Breast epithelium (tissue), 4 donors: ENCODE measurements at regions of chr21 and their contacts with region 1.

Region 1: DNA sequence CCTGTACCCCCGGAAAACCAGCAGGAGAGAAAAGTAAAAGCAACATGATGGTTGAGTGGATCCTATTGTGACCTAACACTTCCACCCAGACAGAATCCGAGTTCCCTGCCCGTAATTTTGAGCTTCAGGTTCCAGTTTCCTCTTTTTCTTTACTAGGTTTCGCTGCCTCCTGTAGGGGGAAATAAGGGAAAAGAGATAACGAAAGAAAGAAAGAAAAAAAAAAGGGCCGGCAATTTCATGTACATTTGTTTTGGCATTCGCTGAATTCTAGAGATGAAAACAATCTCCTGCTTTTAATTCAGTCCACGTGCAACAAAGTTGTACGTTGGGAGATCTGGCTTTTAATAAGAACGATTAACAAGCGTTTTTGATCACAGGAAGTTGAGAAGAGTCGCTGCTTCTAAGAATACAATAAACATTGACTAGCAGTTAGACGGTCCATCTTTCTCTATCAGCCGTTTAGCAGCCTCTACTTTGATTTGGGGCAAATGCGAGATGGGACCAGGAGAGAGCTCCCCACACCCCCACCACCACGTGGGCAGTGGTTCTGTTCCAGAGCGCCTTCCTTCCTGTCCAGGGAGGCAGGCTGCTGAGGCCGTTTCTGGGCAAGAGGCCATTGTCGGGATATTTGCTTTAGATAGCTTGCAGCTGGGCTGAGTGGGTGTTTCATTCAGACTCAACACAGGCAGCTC is 155.9 kb upstream of the RUNX1 start:
- DNase-seq: no peak
- H3K4me3 ChIP-seq: peak overlapping the region; percentile 10 to 50 (median 13)
- H3K27ac ChIP-seq: peak overlapping the region; percentile 68 to 90
- H3K4me1 ChIP-seq: peaks cover 0 to 5% of the 10 kb centered on the region in 2 donors
- H3K27me3 ChIP-seq: no peaks in the 10 kb centered on the region
- CTCF ChIP-seq: no peak
- POLR2A ChIP-seq: no peak

Region 2: DNA sequence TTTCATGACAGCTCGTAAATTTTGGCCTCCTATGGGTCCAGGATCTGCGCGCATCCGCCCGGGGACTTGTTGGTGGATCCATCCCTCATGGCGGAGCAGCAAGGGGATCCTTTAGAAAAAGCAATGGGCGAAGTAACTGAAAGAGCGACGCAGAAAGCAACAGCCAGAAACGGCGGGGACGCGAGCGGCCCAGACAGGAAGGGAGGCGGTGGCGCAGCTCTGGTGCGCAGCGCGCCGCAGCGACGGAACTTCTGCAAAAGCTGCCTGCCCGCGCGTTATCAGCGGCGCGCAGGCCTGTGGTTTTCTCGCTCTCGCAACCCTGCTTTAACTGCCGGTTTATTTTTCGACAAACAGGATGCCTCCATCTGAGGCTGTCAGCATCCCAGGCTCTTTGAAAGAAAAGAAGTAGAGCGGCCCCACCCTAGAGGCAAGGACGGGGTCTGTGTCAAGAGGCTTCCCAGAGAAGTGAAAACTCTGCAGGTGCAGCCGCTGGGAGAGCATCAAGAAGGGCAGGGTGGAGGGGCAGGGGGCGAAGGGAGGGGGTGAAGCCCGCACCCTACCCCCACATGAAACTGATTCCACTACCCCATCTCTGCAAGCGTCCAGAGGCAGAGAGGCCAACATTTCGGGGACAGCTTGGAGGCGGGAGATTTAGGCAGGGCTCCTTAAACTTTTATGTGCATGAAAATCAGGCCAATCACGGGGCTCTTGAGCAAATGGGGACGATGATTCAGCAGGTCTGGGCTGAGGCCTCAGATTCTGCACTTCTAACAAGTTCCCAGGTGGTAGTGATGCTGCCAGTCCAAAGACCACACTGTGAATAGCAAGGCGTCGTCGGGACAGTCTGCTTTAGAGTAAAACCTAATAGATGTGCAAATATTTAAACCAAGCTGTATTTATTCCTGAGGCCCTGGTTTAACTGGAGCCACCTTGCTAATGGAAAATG is 178.1 kb before region 1 on chr21:
- intact Hi-C with region 1: no loop called
- DNase-seq: no peak
- H3K4me3 ChIP-seq: peak overlapping the region in 1 of 3 donors; percentile 12
- H3K27ac ChIP-seq: no peak overlapping the region
- H3K4me1 ChIP-seq: no peaks in the 10 kb centered on the region
- H3K27me3 ChIP-seq: no peaks in the 10 kb centered on the region
- CTCF ChIP-seq: no peak
- POLR2A ChIP-seq: no peak

Region 3: DNA sequence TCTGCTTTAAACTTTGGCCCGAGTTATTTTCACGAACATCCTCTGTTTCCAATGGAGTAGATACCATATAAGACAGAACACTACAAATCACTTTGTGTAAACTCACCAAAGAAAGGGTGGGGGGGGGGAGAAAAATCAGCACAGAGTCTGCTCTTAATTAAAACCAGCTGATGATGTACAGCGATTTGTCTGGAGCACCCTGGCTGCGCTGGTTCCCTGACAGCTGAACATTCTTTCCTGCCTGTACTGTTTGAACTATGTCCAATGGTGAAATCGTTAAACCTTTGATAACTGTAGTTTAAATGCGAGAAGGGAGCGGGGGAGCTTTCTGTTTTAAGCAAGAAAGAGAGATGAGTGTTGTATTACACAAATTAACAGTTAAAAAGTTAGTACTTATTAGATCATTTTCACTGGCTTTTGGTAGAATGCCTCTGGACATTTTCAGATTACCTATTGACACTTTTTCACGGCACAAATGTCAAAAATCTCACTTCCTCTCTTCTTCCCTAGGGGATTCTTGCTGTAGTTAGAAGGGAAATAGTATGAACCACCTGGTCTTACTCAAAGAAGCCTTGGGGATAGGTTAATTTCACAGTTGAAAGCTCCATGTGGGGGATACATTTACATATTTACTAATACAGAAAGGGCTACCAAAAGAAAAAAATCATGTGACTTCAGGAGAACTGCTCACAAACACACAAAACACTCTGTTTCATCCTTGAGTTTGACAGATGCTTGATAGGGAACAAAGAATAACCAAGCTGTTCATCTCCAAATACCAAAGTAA is 15.7 kb before region 1 on chr21:
- intact Hi-C with region 1: loop called (anchors 1 kb)
- DNase-seq: no peak
- H3K4me3 ChIP-seq: no peak overlapping the region
- H3K27ac ChIP-seq: no peak overlapping the region
- H3K4me1 ChIP-seq: no peaks in the 10 kb centered on the region
- H3K27me3 ChIP-seq: no peaks in the 10 kb centered on the region
- CTCF ChIP-seq: no peak
- POLR2A ChIP-seq: no peak

Region 4: GRCh38 chr21:35578350-35578782 is 373.4 kb after region 1 on chr21:
- intact Hi-C with region 1: no loop called
- DNase-seq: no peak
- H3K4me3 ChIP-seq: no peak overlapping the region
- H3K27ac ChIP-seq: no peak overlapping the region
- H3K4me1 ChIP-seq: no peaks in the 10 kb centered on the region
- H3K27me3 ChIP-seq: no peaks in the 10 kb centered on the region
- CTCF ChIP-seq: no peak
- POLR2A ChIP-seq: no peak